Activated CD4-positive, alpha-beta T cell treated with anti-CD3 and anti-CD28 coated beads for 36 hours (primary cell): ENCODE measurements at regions of chr16 and their contacts with region 1.

Region 1: GRCh38 chr16:29805378-29806098 is 791 bp upstream of the MAZ start:
- DNase-seq: peak; percentile 99
- ATAC-seq: peak; percentile 64
- H3K4me3 Mint-ChIP-seq: peak overlapping the region; percentile 99
- H3K27ac Mint-ChIP-seq: peak overlapping the region; percentile 100
- H3K4me1 Mint-ChIP-seq: peaks cover 37% of the 10 kb centered on the region
- H3K27me3 Mint-ChIP-seq: no peaks in the 10 kb centered on the region

Region 2: DNA sequence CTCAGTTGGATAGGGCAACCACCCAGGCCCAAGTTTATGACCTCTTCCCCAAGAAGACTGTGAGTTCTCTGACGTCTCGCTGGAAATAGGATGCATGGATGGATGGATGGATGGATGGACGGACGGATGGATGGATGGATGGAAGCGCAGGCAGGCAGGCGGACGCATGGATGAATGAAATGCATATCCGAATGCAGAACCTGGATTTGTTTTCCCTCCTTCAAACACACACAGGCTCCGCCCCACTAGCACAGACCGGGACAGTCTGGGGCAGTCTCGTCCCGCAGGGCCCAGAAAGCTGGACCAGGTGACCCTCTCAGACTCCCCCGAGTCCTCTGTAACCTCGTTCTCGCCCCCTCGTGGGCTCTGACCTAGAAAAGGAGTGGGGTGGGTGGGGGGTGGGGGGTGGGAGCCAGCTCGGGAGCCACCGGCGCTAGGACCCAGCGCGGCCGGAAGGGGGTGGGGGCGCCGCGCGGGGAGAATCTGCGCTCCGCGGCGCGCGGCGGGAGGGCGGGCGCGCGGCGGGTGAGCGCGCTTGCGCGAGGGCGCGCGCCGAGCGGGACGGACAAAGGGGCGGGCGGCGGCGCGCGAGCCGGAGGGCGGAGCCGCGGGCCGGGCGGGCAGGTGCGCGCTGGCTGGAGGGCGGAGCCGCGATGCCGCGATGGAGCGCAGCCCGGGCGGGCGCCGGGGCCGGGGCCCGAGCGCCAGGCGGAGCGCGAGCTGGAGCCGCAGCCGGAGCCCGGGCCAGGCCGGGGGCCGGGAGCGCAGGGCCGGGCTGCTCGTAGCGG is 1513.5 kb before region 1 on chr16 and contains the start of gene SBK1:
- CTCF ChIA-PET with region 1: no interaction called
- POLR2A ChIA-PET with region 1: no interaction called
- intact Hi-C with region 1: loop called in 1 of 2 experiments (anchors 5 kb)
- DNase-seq: peak; percentile 91
- ATAC-seq: peak; percentile 94
- H3K4me3 Mint-ChIP-seq: peak within 1 kb of the TSS; percentile 84
- H3K27ac Mint-ChIP-seq: peak within 1 kb of the TSS; percentile 93
- H3K4me1 Mint-ChIP-seq: peaks cover 51% of the 10 kb centered on the region
- H3K27me3 Mint-ChIP-seq: no peaks in the 10 kb centered on the region
- total RNA-seq, gene SBK1: 6.5 to 6.6 TPM

Region 3: DNA sequence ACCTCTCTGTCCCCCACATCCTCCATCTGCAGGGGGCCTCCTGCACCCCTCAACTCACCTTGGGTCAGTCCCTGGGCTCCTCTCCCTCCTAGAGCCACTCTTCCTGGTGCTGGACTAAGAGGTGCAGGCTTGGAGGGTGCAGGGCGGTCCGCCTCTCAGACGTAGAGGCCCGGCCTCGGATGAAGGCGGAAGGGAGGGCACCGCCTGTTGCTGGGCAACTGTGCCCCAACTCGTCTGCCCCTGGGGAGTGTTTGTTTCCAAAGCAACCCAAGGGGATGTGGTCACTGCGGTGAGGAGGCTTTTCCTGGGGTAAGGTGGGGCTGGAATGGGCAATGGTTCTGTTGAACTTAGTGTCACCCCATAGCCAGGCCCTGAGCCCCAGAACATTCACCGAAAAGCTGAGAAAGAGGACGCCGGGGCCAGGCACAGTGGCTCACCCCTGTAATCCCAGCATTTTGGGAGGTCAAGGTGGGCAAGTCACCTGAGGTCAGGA is 59.6 kb before region 1 on chr16 and contains the start of gene C16orf54:
- CTCF ChIA-PET with region 1: no interaction called
- POLR2A ChIA-PET with region 1: no interaction called
- intact Hi-C with region 1: loop called in 1 of 2 experiments (anchors 1 kb)
- DNase-seq: peak; percentile 93
- ATAC-seq: peak; percentile 78
- H3K4me3 Mint-ChIP-seq: peak within 1 kb of the TSS; percentile 97
- H3K27ac Mint-ChIP-seq: peak within 1 kb of the TSS; percentile 97
- H3K4me1 Mint-ChIP-seq: peaks cover 59% of the 10 kb centered on the region
- H3K27me3 Mint-ChIP-seq: no peaks in the 10 kb centered on the region
- total RNA-seq, gene C16orf54: 21.3 to 22.0 TPM

Region 4: DNA sequence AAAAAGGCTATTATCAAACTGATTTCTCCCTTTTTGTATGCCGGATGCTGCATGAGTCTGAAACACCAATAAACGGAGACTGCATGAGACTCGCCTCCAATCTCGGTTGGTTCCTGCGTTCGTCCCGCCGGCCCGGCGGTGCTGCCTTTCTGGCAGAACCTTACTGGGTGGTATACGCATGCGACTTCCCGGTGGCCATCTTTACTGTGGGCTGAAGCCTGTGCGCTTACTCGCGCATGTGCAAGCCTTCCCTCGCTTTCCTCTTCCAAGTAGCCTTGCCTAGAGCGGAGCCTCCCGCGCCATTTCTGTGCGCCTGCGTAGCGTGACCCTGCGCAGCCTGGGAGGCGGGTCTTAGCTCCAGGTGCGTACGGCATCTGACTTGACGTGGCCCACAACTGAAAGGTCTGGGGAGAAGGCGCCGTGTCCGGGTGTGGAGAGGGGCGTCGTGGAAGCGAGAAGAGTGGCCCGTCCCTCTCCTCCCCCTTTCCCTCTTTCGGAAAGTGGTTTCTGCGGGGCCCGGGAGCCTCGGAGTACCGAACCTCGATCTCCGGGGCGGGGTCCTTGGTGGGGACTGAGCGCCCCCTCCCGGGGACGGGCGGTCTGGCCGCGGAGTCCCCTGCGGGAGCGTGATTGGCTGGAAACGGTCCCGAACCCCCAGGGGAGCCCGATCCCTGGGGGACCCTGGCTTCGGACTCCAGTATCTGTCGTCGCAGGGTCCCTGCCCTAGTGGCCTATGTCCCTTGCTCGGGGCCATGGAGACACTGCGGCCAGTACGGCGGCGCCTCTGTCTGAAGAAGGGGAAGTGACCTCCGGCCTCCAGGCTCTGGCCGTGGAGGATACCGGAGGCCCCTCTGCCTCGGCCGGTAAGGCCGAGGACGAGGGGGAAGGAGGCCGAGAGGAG is 10.5 kb after region 1 on chr16 and contains the start of gene PAGR1:
- CTCF ChIA-PET with region 1: interaction called, 39 read pairs
- POLR2A ChIA-PET with region 1: interaction called, 36 read pairs
- intact Hi-C with region 1: loop called (anchors 1 kb)
- DNase-seq: peak; percentile 99
- ATAC-seq: peak; percentile 72
- H3K4me3 Mint-ChIP-seq: peak within 1 kb of the TSS; percentile 84
- H3K27ac Mint-ChIP-seq: peak within 1 kb of the TSS; percentile 97
- H3K4me1 Mint-ChIP-seq: peaks cover 57% of the 10 kb centered on the region
- H3K27me3 Mint-ChIP-seq: no peaks in the 10 kb centered on the region
- total RNA-seq, gene PAGR1: 20.6 to 25.6 TPM

Region 5: GRCh38 chr16:29848420-29849297 is 43.1 kb after region 1 on chr16:
- CTCF ChIA-PET with region 1: interaction called, 50 read pairs
- POLR2A ChIA-PET with region 1: interaction called, 6 read pairs
- intact Hi-C with region 1: loop called (anchors 1 kb)
- DNase-seq: peak; percentile 93
- ATAC-seq: peak; percentile 97
- H3K4me3 Mint-ChIP-seq: no peak overlapping the region
- H3K27ac Mint-ChIP-seq: no peak overlapping the region
- H3K4me1 Mint-ChIP-seq: peaks cover 7% of the 10 kb centered on the region
- H3K27me3 Mint-ChIP-seq: no peaks in the 10 kb centered on the region

Region 6: GRCh38 chr16:29973384-29974246 is 168.1 kb after region 1 on chr16 and contains the start of gene TAOK2:
- CTCF ChIA-PET with region 1: interaction called, 5 read pairs
- POLR2A ChIA-PET with region 1: no interaction called
- intact Hi-C with region 1: loop called in 1 of 2 experiments (anchors 1 kb)
- DNase-seq: peak; percentile 98
- ATAC-seq: peak; percentile 98
- H3K4me3 Mint-ChIP-seq: peak within 1 kb of the TSS; percentile 87
- H3K27ac Mint-ChIP-seq: peak within 1 kb of the TSS; percentile 86
- H3K4me1 Mint-ChIP-seq: peaks cover 31% of the 10 kb centered on the region
- H3K27me3 Mint-ChIP-seq: no peaks in the 10 kb centered on the region
- total RNA-seq, gene TAOK2: 24.1 to 24.4 TPM

Region 7: GRCh38 chr16:30122604-30123160 is 317.1 kb after region 1 on chr16:
- CTCF ChIA-PET with region 1: no interaction called
- POLR2A ChIA-PET with region 1: no interaction called
- intact Hi-C with region 1: no loop called
- DNase-seq: peak; percentile 35
- ATAC-seq: peak; percentile 37
- H3K4me3 Mint-ChIP-seq: peak overlapping the region; percentile 87
- H3K27ac Mint-ChIP-seq: peak overlapping the region; percentile 89
- H3K4me1 Mint-ChIP-seq: peaks cover 17% of the 10 kb centered on the region
- H3K27me3 Mint-ChIP-seq: no peaks in the 10 kb centered on the region

Region 8: GRCh38 chr16:30355144-30355894 is 549.8 kb after region 1 on chr16 and contains the start of gene CD2BP2:
- CTCF ChIA-PET with region 1: no interaction called
- POLR2A ChIA-PET with region 1: no interaction called
- intact Hi-C with region 1: no loop called
- DNase-seq: peak; percentile 94
- ATAC-seq: peak; percentile 88
- H3K4me3 Mint-ChIP-seq: peak within 1 kb of the TSS; percentile 90
- H3K27ac Mint-ChIP-seq: peak within 1 kb of the TSS; percentile 94
- H3K4me1 Mint-ChIP-seq: peaks cover 32% of the 10 kb centered on the region
- H3K27me3 Mint-ChIP-seq: no peaks in the 10 kb centered on the region
- total RNA-seq, gene CD2BP2: 42.3 to 51.8 TPM